AG04449 (cell line): ENCODE measurements at regions of chr4 and their contacts with region 1.

Region 1: GRCh38 chr4:56467284-56468096 is at the start of gene SRP72:
- DNase-seq: peak; percentile 51
- H3K4me3 ChIP-seq: peak within 1 kb of the TSS; percentile 89
- CTCF ChIP-seq: no peak

Region 2: GRCh38 chr4:56435306-56435926 is 32.1 kb before region 1 on chr4 and contains the start of gene PPAT:
- CTCF ChIA-PET with region 1: interaction called, 5 read pairs
- POLR2A ChIA-PET with region 1: interaction called, 13 read pairs
- DNase-seq: peak; percentile 69
- H3K4me3 ChIP-seq: peak within 1 kb of the TSS; percentile 93
- CTCF ChIP-seq: peak; percentile 46

Region 3: GRCh38 chr4:56728512-56728911 is 261.0 kb after region 1 on chr4:
- CTCF ChIA-PET with region 1: no interaction called
- POLR2A ChIA-PET with region 1: no interaction called
- DNase-seq: peak; percentile 87
- H3K4me3 ChIP-seq: no peak overlapping the region
- CTCF ChIP-seq: no peak